Panc1 (cell line): ENCODE measurements at regions of chr2 and their contacts with region 1.

Region 1: DNA sequence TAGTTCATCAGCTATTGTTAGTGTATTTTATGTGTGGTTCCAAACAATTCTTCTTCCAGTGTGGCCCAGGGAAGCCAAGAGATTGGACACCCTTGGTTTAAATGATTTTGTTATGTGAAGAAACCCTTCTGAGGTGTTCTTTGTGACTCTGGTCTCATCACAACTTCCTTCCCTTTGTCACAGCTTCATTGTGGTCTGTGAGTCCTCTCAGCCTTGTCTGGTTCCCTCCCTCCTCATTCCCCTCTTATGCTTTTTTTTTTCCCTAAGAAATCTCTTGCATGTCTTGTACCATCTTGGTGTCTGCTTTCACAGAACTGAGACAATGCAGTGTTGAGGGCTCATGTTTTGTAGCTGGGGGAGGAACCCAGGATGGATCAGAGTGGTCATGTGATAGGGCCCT is 118.9 kb downstream of the TMEM182 start:
- DNase-seq: no peak
- ATAC-seq: no peak
- H3K4me3 ChIP-seq: no peak overlapping the region
- H3K27ac ChIP-seq: no peak overlapping the region
- H3K4me1 ChIP-seq: no peaks in the 10 kb centered on the region
- H3K27me3 ChIP-seq: no peaks in the 10 kb centered on the region
- CTCF ChIP-seq: no peak

Region 2: GRCh38 chr2:102826904-102827303 is 53.8 kb before region 1 on chr2:
- CTCF ChIA-PET with region 1: no interaction called
- POLR2A ChIA-PET with region 1: interaction called, 12 read pairs
- in situ Hi-C with region 1: no loop called
- intact Hi-C with region 1: no loop called
- DNase-seq: no peak
- ATAC-seq: no peak
- H3K4me3 ChIP-seq: no peak overlapping the region
- H3K27ac ChIP-seq: no peak overlapping the region
- H3K4me1 ChIP-seq: no peaks in the 10 kb centered on the region
- H3K27me3 ChIP-seq: no peaks in the 10 kb centered on the region
- CTCF ChIP-seq: no peak

Region 3: GRCh38 chr2:102932471-102932870 is 51.7 kb after region 1 on chr2:
- CTCF ChIA-PET with region 1: no interaction called
- POLR2A ChIA-PET with region 1: no interaction called
- in situ Hi-C with region 1: no loop called
- intact Hi-C with region 1: no loop called
- DNase-seq: no peak
- ATAC-seq: no peak
- H3K4me3 ChIP-seq: no peak overlapping the region
- H3K27ac ChIP-seq: no peak overlapping the region
- H3K4me1 ChIP-seq: no peaks in the 10 kb centered on the region
- H3K27me3 ChIP-seq: no peaks in the 10 kb centered on the region
- CTCF ChIP-seq: no peak